ENCODE measurements at regions of chr16 and their contacts with region 1.

Region 1: GRCh38 chr16:67546761-67547422 is 15.4 kb upstream of the CTCF start:
- DNase-seq: peak in 7 of 10 donors; percentile 64 to 80 (median 71)
- H3K4me3 ChIP-seq: peak overlapping the region in 1 of 59 donors; percentile 9
- H3K27ac ChIP-seq: peak overlapping the region in 53 of 59 donors; percentile 1 to 80 (median 60)
- H3K27me3 ChIP-seq: no peaks in the 10 kb centered on the region
- CTCF ChIP-seq: peak; percentile 79 to 98 (median 92)

Region 2: GRCh38 chr16:67641779-67642708 is 95.2 kb after region 1 on chr16:
- intact Hi-C with region 1: loop called in 1 of 2 experiments (anchors 5 kb)
- DNase-seq: peak in 8 of 10 donors; percentile 52 to 89 (median 70)
- H3K4me3 ChIP-seq: no peak overlapping the region
- H3K27ac ChIP-seq: peak overlapping the region in 34 of 59 donors; percentile 1 to 71 (median 41)
- H3K27me3 ChIP-seq: peaks cover 0 to 21% (median 9%) of the 10 kb centered on the region in 45 donors
- CTCF ChIP-seq: no peak

Region 3: GRCh38 chr16:67667817-67668494 is 121.1 kb after region 1 on chr16:
- intact Hi-C with region 1: loop called in 1 of 2 experiments (anchors 5 kb)
- DNase-seq: peak; percentile 71 to 93 (median 90)
- H3K4me3 ChIP-seq: peak overlapping the region; percentile 67 to 97 (median 81)
- H3K27ac ChIP-seq: peak overlapping the region; percentile 42 to 98 (median 92)
- H3K27me3 ChIP-seq: no peaks in the 10 kb centered on the region
- CTCF ChIP-seq: peak in 55 of 56 donors; percentile 56 to 92 (median 83)